Activated CD8-positive, alpha-beta T cell treated with anti-CD3 and anti-CD28 coated beads, Interleukin-2, amount 10 ng/mL, durations not matched to agents 7 days and 5 days (primary cell): ENCODE measurements at regions of chr2 and their contacts with region 1.

Region 1: DNA sequence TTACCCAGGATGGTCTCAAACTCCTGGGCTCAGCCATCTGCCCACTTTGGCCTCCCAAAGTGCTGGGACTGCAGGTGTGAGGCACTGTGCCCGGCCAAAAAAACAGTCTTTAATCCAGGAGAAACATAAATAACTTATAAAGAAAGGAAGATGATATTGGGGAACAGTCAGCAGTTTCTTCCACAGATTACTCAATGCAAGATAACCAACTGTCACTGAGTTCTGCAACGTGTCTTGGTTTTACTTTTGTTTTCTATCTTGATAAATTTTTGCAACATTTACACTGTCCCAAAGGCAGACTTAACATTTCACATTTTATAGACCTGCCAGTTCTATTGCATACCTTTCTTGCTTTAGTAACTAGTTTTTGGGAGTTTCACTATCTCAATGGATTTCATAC is 71.1 kb downstream of the ANKRD44 start:
- DNase-seq: no peak
- ATAC-seq: peak; percentile 57
- H3K4me3 Mint-ChIP-seq: peak overlapping the region; percentile 77
- H3K27ac Mint-ChIP-seq: peak overlapping the region; percentile 91
- H3K4me1 Mint-ChIP-seq: peaks cover 83% of the 10 kb centered on the region
- H3K27me3 Mint-ChIP-seq: no peaks in the 10 kb centered on the region

Region 2: DNA sequence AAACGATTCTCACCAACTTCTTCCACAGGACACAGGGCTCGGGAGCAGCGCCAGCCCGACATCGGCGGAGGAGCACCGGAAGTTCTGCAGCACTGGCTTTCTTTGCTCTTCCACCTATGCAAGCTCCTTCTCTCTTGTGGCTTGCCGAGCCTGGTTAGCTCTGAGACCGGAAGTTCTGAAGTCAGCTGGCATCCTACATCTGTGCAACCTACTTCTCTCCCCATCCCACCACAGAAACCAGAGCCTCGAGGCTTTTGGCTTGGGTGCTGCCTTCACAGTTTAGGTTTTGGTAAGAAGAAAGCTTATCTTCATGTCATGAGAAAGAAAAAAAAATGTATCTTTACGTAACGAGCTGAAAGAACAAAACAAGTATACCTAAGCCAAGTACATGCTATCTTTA is 40.5 kb before region 1 on chr2:
- CTCF ChIA-PET with region 1: interaction called, 17 read pairs
- POLR2A ChIA-PET with region 1: interaction called, 13 read pairs
- DNase-seq: peak; percentile 97
- ATAC-seq: peak; percentile 82
- H3K4me3 Mint-ChIP-seq: peak overlapping the region; percentile 81
- H3K27ac Mint-ChIP-seq: peak overlapping the region; percentile 93
- H3K4me1 Mint-ChIP-seq: peaks cover 89% of the 10 kb centered on the region
- H3K27me3 Mint-ChIP-seq: no peaks in the 10 kb centered on the region

Region 3: GRCh38 chr2:197255543-197255942 is 16.1 kb after region 1 on chr2:
- CTCF ChIA-PET with region 1: interaction called, 22 read pairs
- POLR2A ChIA-PET with region 1: interaction called, 29 read pairs
- DNase-seq: peak; percentile 84
- ATAC-seq: peak; percentile 94
- H3K4me3 Mint-ChIP-seq: peak overlapping the region; percentile 77
- H3K27ac Mint-ChIP-seq: peak overlapping the region; percentile 92
- H3K4me1 Mint-ChIP-seq: peaks cover 78% of the 10 kb centered on the region
- H3K27me3 Mint-ChIP-seq: no peaks in the 10 kb centered on the region

Region 4: GRCh38 chr2:197304556-197305011 is 65.2 kb after region 1 on chr2:
- CTCF ChIA-PET with region 1: interaction called, 8 read pairs
- POLR2A ChIA-PET with region 1: interaction called, 32 read pairs
- DNase-seq: no peak
- ATAC-seq: peak; percentile 12
- H3K4me3 Mint-ChIP-seq: peak overlapping the region; percentile 95
- H3K27ac Mint-ChIP-seq: peak overlapping the region; percentile 84
- H3K4me1 Mint-ChIP-seq: peaks cover 81% of the 10 kb centered on the region
- H3K27me3 Mint-ChIP-seq: no peaks in the 10 kb centered on the region